Activated CD4-positive, alpha-beta T cell treated with anti-CD3 and anti-CD28 coated beads for 36 hours (primary cell): ENCODE measurements at regions of chr6 and their contacts with region 1.

Region 1: DNA sequence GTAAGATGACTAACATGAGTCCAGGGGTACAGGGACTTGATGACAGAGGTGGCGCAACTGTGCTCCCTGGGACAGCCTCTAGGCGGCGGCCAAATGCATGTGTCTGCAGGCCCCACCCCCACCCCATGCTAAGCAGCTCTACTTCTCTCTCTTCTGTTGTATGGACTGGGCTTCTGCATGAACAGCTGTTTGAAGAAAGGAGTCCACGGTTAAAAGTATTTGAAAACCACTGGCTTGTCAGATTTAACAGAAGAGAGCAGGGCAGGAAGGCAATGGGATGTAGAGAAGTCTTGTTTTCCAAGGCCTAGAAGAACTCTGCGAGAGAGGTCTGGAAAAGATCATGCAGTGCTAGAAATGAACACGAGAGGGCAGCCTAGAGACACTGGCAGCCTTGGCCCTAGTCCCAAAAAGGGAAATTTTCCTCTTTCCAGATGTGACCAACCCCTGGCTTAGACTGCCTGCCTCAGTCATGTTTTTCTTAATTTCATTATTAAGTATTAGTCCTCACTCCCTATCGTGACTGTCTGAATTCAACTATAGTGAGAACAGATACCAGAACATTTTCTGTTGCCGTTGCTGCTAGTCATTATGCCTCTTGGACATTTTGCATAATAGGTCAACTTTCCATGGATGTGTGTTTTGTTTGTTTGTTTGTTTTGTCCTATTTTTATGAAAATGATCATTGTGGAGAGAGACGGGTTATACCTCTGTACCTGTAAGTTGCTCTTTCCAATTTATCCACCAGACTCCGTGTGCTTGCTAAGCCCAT is 265.0 kb downstream of the ADGRG6 start:
- DNase-seq: peak; percentile 75
- ATAC-seq: peak; percentile 28
- H3K4me3 Mint-ChIP-seq: no peak overlapping the region
- H3K27ac Mint-ChIP-seq: no peak overlapping the region
- H3K4me1 Mint-ChIP-seq: peaks cover 68% of the 10 kb centered on the region
- H3K27me3 Mint-ChIP-seq: no peaks in the 10 kb centered on the region

Region 2: GRCh38 chr6:142146828-142147662 is 419.8 kb before region 1 on chr6 and contains the starts of genes NMBR and VTA1:
- CTCF ChIA-PET with region 1: no interaction called
- POLR2A ChIA-PET with region 1: no interaction called
- intact Hi-C with region 1: loop called in 1 of 2 experiments (anchors 10 kb)
- DNase-seq: peak; percentile 98
- ATAC-seq: peak; percentile 98
- H3K4me3 Mint-ChIP-seq: peak within 1 kb of the TSS; percentile 97
- H3K27ac Mint-ChIP-seq: peak within 1 kb of the TSS; percentile 95
- H3K4me1 Mint-ChIP-seq: peaks cover 56% of the 10 kb centered on the region
- H3K27me3 Mint-ChIP-seq: no peaks in the 10 kb centered on the region
- total RNA-seq, gene NMBR: not detected
- total RNA-seq, gene VTA1: 55.6 to 73.9 TPM

Region 3: GRCh38 chr6:142544199-142544838 is 22.5 kb before region 1 on chr6:
- CTCF ChIA-PET with region 1: interaction called, 5 read pairs
- POLR2A ChIA-PET with region 1: interaction called, 3 read pairs
- intact Hi-C with region 1: loop called in 1 of 2 experiments (anchors 1 kb)
- DNase-seq: no peak
- ATAC-seq: peak; percentile 78
- H3K4me3 Mint-ChIP-seq: no peak overlapping the region
- H3K27ac Mint-ChIP-seq: peak overlapping the region; percentile 58
- H3K4me1 Mint-ChIP-seq: peaks cover 45% of the 10 kb centered on the region
- H3K27me3 Mint-ChIP-seq: peaks cover 6% of the 10 kb centered on the region

Region 4: GRCh38 chr6:142692942-142693341 is 126.1 kb after region 1 on chr6:
- CTCF ChIA-PET with region 1: interaction called, 7 read pairs
- POLR2A ChIA-PET with region 1: no interaction called
- intact Hi-C with region 1: loop called (anchors 2 to 5 kb)
- DNase-seq: peak; percentile 79
- ATAC-seq: peak; percentile 75
- H3K4me3 Mint-ChIP-seq: no peak overlapping the region
- H3K27ac Mint-ChIP-seq: peak overlapping the region; percentile 62
- H3K4me1 Mint-ChIP-seq: peaks cover 27% of the 10 kb centered on the region
- H3K27me3 Mint-ChIP-seq: no peaks in the 10 kb centered on the region

Region 5: DNA sequence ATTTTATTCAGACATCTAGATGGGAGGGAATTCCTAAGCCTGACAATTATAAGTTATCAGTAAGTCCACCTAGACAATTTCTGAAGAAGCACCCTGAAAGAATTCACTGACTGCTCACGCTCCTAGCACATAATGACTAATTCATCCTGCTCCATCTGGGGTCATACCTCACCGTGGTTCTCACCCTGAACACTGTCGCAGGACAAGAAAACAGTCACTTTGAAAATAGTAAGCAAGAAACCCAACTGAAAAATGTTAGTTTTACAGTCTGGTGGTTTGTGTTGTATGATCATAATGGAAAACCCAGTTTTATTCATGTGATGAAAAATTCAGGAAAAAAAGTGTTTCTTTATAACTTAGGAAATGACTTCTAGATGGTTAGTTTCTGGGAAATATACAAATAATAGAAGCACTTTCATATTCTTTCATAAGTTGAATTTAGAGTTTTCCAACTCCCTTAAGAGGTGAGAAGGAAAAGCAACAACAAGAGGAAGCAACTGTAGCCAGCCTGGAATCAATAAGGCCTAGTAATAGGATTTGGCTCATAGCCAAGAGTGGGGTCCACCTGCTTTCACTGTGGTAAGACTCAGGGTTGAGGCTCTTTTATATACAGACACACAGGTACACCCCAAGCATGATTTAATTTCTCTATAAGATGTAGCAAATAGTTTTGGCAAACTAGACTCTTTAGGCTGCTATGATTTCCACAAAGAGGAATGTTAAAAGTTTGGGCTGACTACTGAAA is 284.0 kb after region 1 on chr6:
- CTCF ChIA-PET with region 1: no interaction called
- POLR2A ChIA-PET with region 1: interaction called, 4 read pairs
- intact Hi-C with region 1: loop called (anchors 5 to 10 kb)
- DNase-seq: peak; percentile 66
- ATAC-seq: peak; percentile 67
- H3K4me3 Mint-ChIP-seq: peak overlapping the region; percentile 37
- H3K27ac Mint-ChIP-seq: peak overlapping the region; percentile 86
- H3K4me1 Mint-ChIP-seq: peaks cover 95% of the 10 kb centered on the region
- H3K27me3 Mint-ChIP-seq: no peaks in the 10 kb centered on the region

Region 6: DNA sequence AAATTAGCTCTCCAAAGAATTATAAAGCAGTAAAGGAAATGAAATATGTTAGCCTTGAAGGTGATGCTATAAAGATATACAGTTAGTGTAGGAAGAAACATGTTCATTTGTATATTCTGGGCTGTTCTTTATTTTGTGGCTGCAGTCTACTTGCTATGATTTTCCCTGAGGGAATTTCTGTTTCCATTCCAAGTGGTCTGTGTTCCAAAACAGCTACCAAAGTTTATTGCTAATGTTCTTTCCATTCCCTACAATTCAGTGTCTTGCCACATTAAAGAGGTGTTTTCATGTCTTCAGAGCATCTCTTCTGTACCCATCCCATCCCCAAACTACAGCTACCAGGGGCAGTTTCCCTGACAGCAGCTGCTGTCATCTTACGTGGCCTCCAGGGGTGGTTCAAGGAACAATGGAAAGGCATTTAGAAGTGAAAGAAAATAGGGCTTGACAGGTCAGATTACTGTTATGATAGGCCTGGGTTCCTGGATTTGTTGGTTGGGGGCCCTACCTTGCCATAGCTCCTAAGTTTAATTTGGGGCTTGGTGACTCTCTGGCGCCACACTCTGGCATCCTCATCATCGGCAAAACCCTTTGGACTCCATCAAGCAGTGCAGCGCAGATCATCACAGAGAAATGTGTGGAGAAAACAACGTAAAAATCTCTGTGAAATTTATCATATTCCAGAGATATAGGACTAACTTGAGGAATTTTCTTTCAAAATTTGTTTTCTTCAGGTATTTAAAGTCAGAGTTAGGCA is 460.1 kb after region 1 on chr6:
- CTCF ChIA-PET with region 1: interaction called, 4 read pairs
- POLR2A ChIA-PET with region 1: no interaction called
- intact Hi-C with region 1: loop called (anchors 1 to 5 kb)
- DNase-seq: peak; percentile 76
- ATAC-seq: peak; percentile 83
- H3K4me3 Mint-ChIP-seq: no peak overlapping the region
- H3K27ac Mint-ChIP-seq: no peak overlapping the region
- H3K4me1 Mint-ChIP-seq: peaks cover 5% of the 10 kb centered on the region
- H3K27me3 Mint-ChIP-seq: no peaks in the 10 kb centered on the region